Activated CD4-positive, alpha-beta memory T cell treated with anti-CD3 and anti-CD28 coated beads, Interleukin-2, amount 10 ng/mL, durations not matched to agents 7 days and 5 days (primary cell): ENCODE measurements at regions of chr12 and their contacts with region 1.

Region 1: DNA sequence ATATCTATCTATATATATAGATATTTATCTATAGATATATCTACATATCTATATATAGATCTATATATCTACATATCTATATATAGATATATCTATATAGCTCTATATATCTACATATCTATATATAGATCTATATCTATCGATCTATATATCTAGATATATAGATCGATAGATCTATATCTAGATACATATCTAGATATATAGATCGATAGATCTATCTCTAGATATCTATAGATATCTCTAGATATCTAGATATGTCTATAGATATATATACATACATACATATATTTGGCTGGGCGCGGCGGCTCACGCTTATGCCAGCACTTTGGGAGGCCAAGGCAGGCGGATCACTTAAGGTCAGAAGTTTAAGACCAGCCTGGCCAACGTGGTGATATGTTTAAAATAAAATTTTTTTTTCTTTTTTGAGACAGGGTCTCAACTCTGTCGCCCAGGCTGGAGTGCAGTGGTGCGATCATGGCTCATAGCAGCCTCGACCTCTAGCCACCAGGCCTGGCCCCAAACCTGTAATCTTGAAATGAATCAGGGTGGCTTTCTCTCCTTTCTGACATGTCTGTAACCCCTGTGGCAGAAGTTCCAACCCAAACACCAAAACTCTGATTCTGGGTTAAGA is 18.1 kb downstream of the ARPC3 start:
- DNase-seq: no peak
- H3K4me3 Mint-ChIP-seq: no peak overlapping the region
- H3K27ac Mint-ChIP-seq: peak overlapping the region; percentile 31
- H3K4me1 Mint-ChIP-seq: peaks cover 6% of the 10 kb centered on the region
- H3K27me3 Mint-ChIP-seq: no peaks in the 10 kb centered on the region

Region 2: GRCh38 chr12:110280779-110281548 is 151.1 kb before region 1 on chr12 and contains the start of gene ATP2A2:
- CTCF ChIA-PET with region 1: interaction called, 20 read pairs
- POLR2A ChIA-PET with region 1: interaction called, 3 read pairs
- DNase-seq: peak; percentile 92
- H3K4me3 Mint-ChIP-seq: peak within 1 kb of the TSS; percentile 82
- H3K27ac Mint-ChIP-seq: peak within 1 kb of the TSS; percentile 85
- H3K4me1 Mint-ChIP-seq: peaks cover 46% of the 10 kb centered on the region
- H3K27me3 Mint-ChIP-seq: peaks cover 8% of the 10 kb centered on the region
- total RNA-seq, gene ATP2A2: 142 TPM

Region 3: GRCh38 chr12:110355073-110355472 is 77.0 kb before region 1 on chr12:
- CTCF ChIA-PET with region 1: interaction called, 56 read pairs
- POLR2A ChIA-PET with region 1: interaction called, 10 read pairs
- DNase-seq: peak; percentile 38
- H3K4me3 Mint-ChIP-seq: no peak overlapping the region
- H3K27ac Mint-ChIP-seq: no peak overlapping the region
- H3K4me1 Mint-ChIP-seq: peaks cover 22% of the 10 kb centered on the region
- H3K27me3 Mint-ChIP-seq: no peaks in the 10 kb centered on the region

Region 4: DNA sequence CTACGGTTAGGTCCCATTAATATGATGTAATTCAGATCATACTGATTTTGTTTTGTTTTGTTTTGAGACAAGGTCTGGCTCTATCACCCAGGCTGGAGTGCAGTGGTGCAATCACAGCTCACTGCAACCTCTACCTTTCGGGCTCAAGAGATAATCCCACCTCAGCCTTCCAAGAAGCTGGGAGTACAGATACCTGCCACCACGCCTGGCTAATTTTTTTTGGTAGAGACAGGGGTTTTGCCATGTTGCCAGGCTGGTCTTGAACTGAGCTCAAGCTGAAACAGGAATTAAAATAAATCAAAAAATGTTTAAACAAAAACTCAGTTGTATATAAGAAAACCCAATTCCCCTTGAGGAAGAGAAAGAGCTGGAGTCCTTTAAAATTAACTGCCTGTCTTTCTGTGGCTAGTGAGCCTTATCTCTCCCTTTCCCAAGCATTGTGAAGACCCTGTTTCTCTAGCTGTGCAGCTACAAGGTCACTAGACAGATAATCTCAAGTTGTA is 10.9 kb before region 1 on chr12:
- CTCF ChIA-PET with region 1: interaction called, 25 read pairs
- POLR2A ChIA-PET with region 1: no interaction called
- DNase-seq: no peak
- H3K4me3 Mint-ChIP-seq: no peak overlapping the region
- H3K27ac Mint-ChIP-seq: no peak overlapping the region
- H3K4me1 Mint-ChIP-seq: no peaks in the 10 kb centered on the region
- H3K27me3 Mint-ChIP-seq: peaks cover 27% of the 10 kb centered on the region

Region 5: DNA sequence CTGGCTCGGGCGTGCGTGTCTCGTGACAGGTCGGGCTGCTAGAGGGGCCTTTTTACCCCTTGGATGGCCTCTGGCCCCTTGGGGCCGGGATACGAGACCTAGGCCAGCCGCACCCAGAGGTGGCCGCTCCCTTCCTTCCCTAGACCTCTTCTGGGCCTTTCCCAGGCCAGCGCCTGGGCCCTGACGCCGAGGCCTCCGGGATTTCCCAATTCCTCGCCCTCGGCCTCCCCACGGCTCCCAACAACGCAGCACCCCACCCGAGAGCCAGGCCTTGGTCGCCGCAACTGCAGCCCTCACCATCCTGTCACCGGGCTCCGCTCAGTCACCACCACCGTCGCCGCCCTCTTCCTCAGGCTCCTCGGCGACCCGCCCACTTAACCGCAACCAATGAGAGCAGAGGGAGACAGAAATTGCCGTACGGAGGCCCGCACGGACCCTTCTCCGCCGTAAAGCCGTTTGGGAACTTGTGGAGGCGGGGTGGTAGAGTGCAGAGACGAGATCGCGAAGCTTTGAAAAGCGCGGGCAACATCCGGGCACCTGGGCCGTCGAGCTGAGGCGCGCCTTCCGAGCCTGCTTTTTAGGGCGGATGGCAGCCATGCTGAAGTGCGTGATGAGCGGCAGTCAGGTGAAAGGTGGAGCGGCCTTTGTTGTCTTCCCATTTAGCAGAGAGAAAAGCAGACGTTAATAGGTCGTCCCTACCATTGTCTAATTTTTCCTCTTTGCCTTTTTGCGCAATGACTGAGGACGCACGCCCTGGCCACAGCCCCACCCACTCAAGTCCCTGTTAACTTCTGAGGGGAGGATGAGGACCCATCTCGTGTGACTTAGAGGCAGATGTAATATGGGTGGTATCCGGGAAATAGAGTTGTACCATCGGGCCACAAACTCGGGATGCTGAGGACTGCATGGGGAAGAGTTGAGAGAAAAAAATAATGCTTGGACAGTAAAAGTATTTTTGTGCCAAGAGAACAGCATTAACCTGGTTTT is 70.0 kb after region 1 on chr12 and contains the starts of genes RAD9B and VPS29:
- CTCF ChIA-PET with region 1: interaction called, 11 read pairs
- POLR2A ChIA-PET with region 1: interaction called, 7 read pairs
- DNase-seq: peak; percentile 100
- H3K4me3 Mint-ChIP-seq: peak within 1 kb of the TSS; percentile 94
- H3K27ac Mint-ChIP-seq: peak within 1 kb of the TSS; percentile 93
- H3K4me1 Mint-ChIP-seq: peaks cover 40% of the 10 kb centered on the region
- H3K27me3 Mint-ChIP-seq: no peaks in the 10 kb centered on the region
- total RNA-seq, gene RAD9B: 1.1 to 2.0 TPM
- total RNA-seq, gene VPS29: 129 to 137 TPM